ENCODE measurements at regions of chr15 and their contacts with region 1.

Region 1: GRCh38 chr15:74620636-74621545 is 5.3 kb downstream of the CLK3 start:
- DNase-seq: peak; percentile 83
- ATAC-seq: peak; percentile 88
- H3K4me3 Mint-ChIP-seq: no peak overlapping the region
- H3K27ac Mint-ChIP-seq: peak overlapping the region; percentile 70
- H3K4me1 Mint-ChIP-seq: peaks cover 22% of the 10 kb centered on the region
- H3K27me3 Mint-ChIP-seq: no peaks in the 10 kb centered on the region
- CTCF ChIP-seq: peak; percentile 80

Region 2: GRCh38 chr15:74552773-74553441 is 68.0 kb before region 1 on chr15:
- CTCF ChIA-PET with region 1: no interaction called
- POLR2A ChIA-PET with region 1: no interaction called
- DNase-seq: no peak
- ATAC-seq: no peak
- H3K4me3 Mint-ChIP-seq: no peak overlapping the region
- H3K27ac Mint-ChIP-seq: no peak overlapping the region
- H3K4me1 Mint-ChIP-seq: peaks cover 11% of the 10 kb centered on the region
- H3K27me3 Mint-ChIP-seq: no peaks in the 10 kb centered on the region
- CTCF ChIP-seq: no peak

Region 3: DNA sequence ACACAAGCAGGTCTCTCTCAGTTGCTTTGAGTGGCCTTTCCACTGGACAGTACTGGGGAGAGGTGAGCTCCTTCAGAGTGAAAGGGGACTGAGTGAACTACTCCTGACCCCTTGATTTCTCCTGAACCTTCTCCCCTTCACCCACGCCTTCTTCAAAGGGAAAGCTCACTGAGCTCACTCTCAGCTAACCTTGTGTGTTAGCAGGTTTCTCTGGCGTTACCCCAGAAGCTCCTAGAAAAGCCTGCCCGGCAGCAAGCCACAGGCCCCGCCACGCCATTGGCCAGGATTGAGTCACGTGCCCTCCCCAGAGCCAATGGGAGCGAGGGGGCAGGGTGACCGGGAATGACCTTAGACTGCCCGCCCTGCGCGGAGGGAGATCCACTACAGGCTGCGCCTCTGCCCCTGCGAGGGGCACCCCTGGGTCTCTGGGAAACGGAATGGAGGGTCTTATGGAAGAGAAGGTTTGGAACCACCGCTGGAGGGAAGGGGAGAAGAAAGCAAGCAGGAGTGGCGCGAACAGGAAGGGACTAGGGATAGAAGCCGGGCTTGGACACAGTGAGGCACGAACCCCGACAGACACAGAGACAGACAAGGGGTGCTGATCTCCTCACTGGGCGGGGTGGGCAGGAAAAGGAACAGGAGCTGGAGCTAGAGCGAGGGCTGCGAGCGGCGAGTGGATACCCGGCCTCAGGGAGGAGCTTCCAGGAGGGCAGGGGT is 22.6 kb before region 1 on chr15:
- CTCF ChIA-PET with region 1: interaction called, 11 read pairs
- POLR2A ChIA-PET with region 1: no interaction called
- DNase-seq: peak; percentile 91
- ATAC-seq: peak; percentile 91
- H3K4me3 Mint-ChIP-seq: peak overlapping the region; percentile 79
- H3K27ac Mint-ChIP-seq: peak overlapping the region; percentile 99
- H3K4me1 Mint-ChIP-seq: peaks cover 14% of the 10 kb centered on the region
- H3K27me3 Mint-ChIP-seq: no peaks in the 10 kb centered on the region
- CTCF ChIP-seq: no peak

Region 4: GRCh38 chr15:74604983-74605794 is 15.7 kb before region 1 on chr15:
- CTCF ChIA-PET with region 1: interaction called, 20 read pairs
- POLR2A ChIA-PET with region 1: no interaction called
- DNase-seq: no peak
- ATAC-seq: no peak
- H3K4me3 Mint-ChIP-seq: no peak overlapping the region
- H3K27ac Mint-ChIP-seq: no peak overlapping the region
- H3K4me1 Mint-ChIP-seq: no peaks in the 10 kb centered on the region
- H3K27me3 Mint-ChIP-seq: peaks cover 28% of the 10 kb centered on the region
- CTCF ChIP-seq: no peak

Region 5: DNA sequence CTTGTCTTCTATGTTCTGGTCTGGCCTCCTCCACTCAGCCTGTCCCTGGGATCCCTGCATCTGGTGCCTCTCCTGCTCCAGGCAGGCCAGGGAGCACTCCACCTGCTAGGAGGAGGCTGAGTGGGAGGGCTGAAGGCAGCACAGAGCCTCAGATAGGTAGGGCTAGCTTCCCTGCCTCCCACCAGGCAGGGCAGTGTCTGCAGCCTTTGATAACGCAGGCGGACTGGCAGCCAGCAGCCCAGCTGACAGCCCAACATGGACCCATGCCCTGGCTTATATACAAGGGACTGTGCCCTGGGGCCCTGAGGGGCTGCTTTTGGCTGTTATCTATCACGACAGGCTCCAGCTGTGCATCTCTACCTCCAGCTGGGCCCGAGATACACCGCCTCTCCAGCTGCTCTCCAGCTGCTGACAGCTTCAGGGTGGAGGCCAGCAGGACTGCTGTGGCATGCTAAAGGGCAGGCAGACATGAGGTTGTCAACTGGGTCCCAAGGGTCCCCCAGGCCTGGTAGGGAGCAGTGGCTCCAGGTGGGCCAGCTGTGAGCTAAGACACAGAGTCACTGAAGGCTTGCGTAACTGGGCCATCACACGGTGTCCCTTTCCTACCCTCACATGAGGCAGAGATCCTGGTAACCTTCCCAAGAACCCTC is 10.5 kb before region 1 on chr15:
- CTCF ChIA-PET with region 1: interaction called, 20 read pairs
- POLR2A ChIA-PET with region 1: no interaction called
- DNase-seq: no peak
- ATAC-seq: no peak
- H3K4me3 Mint-ChIP-seq: no peak overlapping the region
- H3K27ac Mint-ChIP-seq: no peak overlapping the region
- H3K4me1 Mint-ChIP-seq: peaks cover 4% of the 10 kb centered on the region; the same call in 1 of the 2 replicates
- H3K27me3 Mint-ChIP-seq: peaks cover 46% of the 10 kb centered on the region
- CTCF ChIP-seq: no peak

Region 6: DNA sequence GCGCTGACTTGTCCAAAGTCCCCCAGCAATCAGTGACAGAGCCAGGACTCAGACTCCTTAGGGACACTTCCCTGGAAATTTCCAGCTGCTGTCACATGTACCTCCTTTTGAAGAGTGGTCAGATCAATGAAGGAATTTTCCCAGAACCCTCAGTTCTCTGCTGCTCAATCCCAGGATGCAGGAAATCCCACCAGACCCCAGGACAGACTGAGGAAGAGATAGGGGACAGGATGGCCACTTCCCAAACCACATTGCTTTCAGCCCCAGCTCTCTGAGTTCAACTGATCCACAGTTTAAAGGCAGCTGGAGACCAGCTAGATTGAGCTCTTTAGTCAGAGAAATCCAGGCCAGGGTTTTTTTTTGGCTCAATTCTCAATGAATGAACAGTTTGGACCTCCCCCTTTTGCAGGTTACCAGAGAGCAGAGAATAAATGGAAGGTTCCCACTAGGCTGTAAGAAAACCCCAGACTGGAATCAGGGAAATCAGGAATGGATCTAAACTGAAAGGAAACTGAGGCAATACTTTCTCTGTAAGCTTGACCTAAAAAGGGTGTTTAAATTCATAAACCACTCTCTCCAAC is 103.0 kb after region 1 on chr15:
- CTCF ChIA-PET with region 1: interaction called, 10 read pairs
- POLR2A ChIA-PET with region 1: no interaction called
- DNase-seq: no peak
- ATAC-seq: peak; percentile 69
- H3K4me3 Mint-ChIP-seq: no peak overlapping the region
- H3K27ac Mint-ChIP-seq: no peak overlapping the region
- H3K4me1 Mint-ChIP-seq: peaks cover 15% of the 10 kb centered on the region
- H3K27me3 Mint-ChIP-seq: peaks cover 65% of the 10 kb centered on the region
- CTCF ChIP-seq: no peak

Measured in WTC11 (cell line).